ENCODE measurements at regions of chr2 and their contacts with region 1.

Region 1: DNA sequence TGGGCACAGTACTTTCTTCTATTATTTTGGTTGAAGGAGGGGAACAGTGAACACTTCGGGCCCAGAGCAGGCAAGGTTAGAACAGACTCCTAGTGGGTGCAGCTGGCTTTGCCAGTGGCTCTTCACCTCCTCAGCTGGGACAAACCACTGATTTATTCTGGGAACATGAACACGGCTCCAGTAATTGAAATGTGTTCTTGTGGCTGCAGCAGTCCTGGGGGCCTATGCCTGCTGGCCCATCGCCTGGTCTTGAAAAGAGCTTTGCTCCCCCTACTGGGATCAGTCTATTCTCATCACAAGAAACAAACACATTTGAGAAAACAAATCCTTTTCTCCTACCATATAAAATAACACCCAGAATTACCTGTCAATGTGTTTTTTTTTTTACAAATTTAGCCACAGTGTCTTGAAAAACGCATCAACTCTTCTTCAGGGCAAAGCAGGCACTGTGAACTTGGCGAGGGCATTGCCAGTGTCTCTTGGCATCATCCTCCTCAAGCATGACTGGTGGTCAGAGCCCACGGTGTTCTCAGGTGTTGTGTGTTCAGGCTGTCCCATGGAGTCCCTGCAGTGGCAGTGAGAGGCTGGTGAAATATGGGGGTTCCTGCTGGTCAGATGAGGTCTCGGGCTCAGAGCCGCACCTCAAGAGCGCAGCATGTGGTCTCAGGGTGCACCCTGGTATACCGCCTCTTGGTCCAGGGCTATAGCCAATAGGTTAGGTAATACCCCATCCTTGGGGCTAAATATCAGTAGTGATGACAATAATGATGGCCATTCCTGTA is 51.3 kb downstream of the RNF144A start:
- DNase-seq: no peak

Region 2: DNA sequence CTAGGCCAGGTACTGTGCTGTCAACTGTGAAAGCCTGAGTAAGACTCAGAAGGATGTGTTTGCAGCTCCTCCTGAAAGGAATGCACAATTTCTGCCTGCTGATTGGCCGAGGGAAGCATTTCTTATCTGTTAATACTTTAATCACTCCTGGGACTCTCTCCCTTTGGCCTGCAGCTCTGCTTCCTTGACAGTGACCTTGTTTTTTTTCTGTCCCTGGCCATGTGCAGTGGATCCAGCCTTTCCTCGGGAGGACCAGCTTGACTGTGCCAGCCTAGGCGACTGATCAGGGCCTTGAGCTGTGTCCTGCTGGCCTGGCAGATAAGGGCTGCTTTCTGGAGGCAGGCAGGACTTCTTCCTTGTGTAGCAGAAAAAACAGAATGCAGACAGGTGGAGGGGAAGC is 41.3 kb before region 1 on chr2:
- intact Hi-C with region 1: loop called (anchors 5 kb)
- DNase-seq: no peak

Region 3: GRCh38 chr2:8152392-8153257 is 1184.1 kb after region 1 on chr2:
- intact Hi-C with region 1: no loop called
- DNase-seq: no peak

Measured in cardiac septum (tissue), 1 donor.